ENCODE measurements at regions of chr12 and their contacts with region 1.

Region 1: GRCh38 chr12:54201001-54201794 is 12.4 kb upstream of the SMUG1 start:
- DNase-seq: no peak
- ATAC-seq: peak; percentile 95
- H3K4me3 ChIP-seq: no peak overlapping the region
- H3K27ac ChIP-seq: peak overlapping the region; percentile 5; the same call in 1 of the 2 replicates
- H3K4me1 ChIP-seq: peaks cover 11% of the 10 kb centered on the region; the same call in 1 of the 2 replicates
- H3K27me3 ChIP-seq: no peaks in the 10 kb centered on the region
- CTCF ChIP-seq: peak; percentile 98

Region 2: DNA sequence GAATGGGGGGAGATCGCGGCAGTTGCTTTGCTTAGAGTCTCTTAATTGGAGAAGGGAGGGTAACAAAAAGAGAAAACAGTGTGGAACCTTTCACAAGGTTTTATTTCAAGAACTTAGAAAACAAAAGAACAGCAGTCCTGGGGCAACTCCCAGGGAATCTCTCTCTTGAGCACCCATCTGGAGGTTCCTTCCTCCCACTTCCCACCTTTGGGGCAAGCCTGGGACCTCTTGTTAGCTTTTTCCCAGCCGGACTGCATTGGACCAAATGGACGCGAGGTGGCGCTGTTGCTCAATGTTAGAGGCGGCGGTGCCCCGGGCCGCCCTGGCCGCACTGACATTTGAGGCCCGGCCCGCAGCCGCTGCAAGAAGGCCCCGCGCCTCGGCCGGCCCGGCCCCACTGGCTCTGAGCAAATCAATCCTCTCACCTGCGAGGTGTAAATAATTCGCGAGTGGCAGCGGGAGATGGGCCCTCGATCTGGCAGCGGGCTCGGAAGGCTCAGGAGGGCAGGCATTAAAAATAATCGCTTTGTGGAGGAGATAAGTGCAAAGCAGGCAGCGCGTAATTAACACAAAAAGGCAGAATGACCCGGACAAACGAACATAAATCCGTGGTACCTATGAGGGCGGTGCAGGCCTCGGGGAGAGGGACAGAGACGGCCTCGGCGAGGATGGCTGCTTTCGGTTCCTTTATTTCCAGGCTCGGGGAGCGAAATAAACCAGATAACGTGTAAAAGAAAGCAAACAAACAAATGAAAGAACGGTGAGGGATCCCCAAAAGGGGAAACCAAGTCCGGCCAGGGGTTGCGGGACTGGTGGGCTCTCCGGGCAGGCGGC is 195.1 kb before region 1 on chr12:
- CTCF ChIA-PET with region 1: interaction called, 7 read pairs
- POLR2A ChIA-PET with region 1: no interaction called
- in situ Hi-C with region 1: no loop called
- intact Hi-C with region 1: loop called (anchors 1 kb)
- DNase-seq: no peak
- ATAC-seq: peak; percentile 56
- H3K4me3 ChIP-seq: peak overlapping the region; percentile 47 to 66
- H3K27ac ChIP-seq: peak overlapping the region; percentile 99
- H3K4me1 ChIP-seq: peaks cover 44% of the 10 kb centered on the region
- H3K27me3 ChIP-seq: no peaks in the 10 kb centered on the region
- CTCF ChIP-seq: peak; percentile 91

Region 3: DNA sequence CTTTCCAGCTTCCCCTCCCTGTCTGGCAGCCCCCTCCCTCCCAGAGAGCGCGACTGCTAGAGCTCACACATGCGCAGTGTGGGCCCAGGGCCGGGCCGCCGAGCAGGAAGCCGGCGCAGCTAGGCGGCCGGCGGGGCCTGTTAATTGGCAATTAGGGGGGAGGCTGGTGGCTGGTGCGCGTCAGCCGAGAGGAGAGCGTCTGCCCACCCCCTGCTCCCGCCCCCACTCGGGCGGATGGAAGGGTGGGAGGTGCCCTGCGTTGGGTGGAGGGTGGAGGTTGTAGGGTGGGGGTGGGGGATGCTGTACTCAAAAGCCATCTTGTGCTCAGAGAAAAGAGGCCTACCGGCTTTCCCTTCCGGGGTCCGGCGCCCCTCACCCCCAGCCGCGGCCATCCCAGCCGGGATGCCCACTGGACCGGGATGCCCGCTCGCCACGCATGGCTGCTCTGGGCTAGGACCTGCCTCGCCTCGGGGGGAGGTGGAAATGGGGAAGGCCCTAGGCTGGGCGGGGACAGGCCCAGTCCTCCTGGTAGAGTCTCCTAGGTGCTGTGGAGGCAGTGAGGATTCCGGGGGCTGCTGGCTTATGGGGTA is 183.2 kb before region 1 on chr12:
- CTCF ChIA-PET with region 1: interaction called, 14 read pairs
- POLR2A ChIA-PET with region 1: no interaction called
- in situ Hi-C with region 1: no loop called
- intact Hi-C with region 1: no loop called
- DNase-seq: peak; percentile 89
- ATAC-seq: peak; percentile 72
- H3K4me3 ChIP-seq: peak overlapping the region; percentile 72 to 91
- H3K27ac ChIP-seq: peak overlapping the region; percentile 94
- H3K4me1 ChIP-seq: peaks cover 60% of the 10 kb centered on the region
- H3K27me3 ChIP-seq: no peaks in the 10 kb centered on the region
- CTCF ChIP-seq: no peak; the same call in 1 of the 2 replicates

Region 4: DNA sequence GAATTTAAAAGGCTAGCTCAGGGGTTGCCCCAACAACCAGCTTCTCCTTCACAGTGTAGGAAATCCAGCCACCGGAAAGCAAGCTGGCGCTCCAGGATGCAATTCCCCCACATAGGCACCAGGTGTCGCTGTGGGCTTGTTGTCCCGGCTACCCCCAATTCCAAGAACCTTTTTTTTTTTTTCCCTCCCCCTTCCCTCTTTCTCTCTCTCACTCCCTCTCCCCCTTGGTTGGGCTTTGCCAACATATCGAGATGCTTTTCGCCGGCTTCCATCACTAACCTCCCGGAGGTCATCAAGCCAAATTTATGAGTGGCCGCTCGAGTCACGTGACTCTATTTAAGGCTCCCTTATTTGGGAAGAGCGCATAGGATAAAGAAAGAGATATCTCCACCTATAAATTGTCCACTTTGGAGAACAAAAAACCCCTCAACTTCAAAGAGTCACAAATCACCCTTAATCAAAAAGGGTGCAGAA is 168.5 kb before region 1 on chr12 and contains the start of gene HOXC5:
- CTCF ChIA-PET with region 1: interaction called, 17 read pairs
- POLR2A ChIA-PET with region 1: no interaction called
- in situ Hi-C with region 1: no loop called
- intact Hi-C with region 1: loop called (anchors 2 kb)
- DNase-seq: peak; percentile 67
- ATAC-seq: peak; percentile 36; the same call in 1 of the 2 replicates
- H3K4me3 ChIP-seq: peak within 1 kb of the TSS in 1 of 2 experiments; percentile 12; a peak in 1 of 4 replicates
- H3K27ac ChIP-seq: peak within 1 kb of the TSS; percentile 78
- H3K4me1 ChIP-seq: peaks cover 95% of the 10 kb centered on the region
- H3K27me3 ChIP-seq: no peaks in the 10 kb centered on the region
- CTCF ChIP-seq: peak; percentile 98
- total RNA-seq, gene HOXC5: 5.0 TPM

Region 5: DNA sequence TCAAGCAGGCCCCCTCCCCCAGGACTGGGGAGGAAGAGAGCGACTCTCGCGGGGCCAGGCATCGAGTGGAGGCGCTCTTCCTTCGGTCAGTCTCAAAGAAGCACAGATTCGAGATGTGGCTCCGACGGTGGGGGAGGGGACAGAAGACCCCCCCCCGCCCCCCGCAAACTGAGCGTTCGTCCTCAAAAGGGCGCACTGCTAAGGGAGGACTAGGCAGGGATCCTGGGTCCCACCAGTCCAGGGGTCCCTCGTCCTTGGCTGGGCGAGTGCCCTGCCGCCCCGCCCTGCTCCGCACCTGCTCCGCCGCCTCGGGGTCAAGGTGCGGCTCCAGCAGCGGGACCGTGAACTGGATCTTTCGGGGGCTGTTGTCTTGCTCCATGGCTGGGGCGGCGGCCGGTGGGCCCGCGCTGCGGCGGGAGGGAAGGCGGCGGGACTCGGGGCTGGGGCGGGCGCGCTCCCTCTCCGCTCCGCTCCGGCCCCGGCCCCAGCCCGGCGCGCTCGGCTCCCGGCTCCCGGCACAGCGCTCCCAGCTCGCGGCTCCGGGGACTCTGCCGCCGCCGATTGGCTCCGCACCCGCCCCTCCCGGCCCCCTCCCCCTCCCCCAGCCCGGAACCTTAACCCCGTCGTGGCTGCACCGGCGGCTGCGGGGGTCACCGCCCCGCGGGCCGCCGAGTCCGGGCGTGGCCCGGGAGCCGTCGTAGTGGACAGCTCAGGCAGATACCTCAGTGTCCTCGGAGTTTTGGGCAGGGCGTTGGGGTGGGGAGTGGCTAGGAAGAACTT is 387.1 kb after region 1 on chr12 and contains the start of gene PPP1R1A:
- CTCF ChIA-PET with region 1: interaction called, 11 read pairs
- POLR2A ChIA-PET with region 1: no interaction called
- in situ Hi-C with region 1: no loop called
- intact Hi-C with region 1: no loop called
- DNase-seq: no peak
- ATAC-seq: peak; percentile 49; the same call in 1 of the 2 replicates
- H3K4me3 ChIP-seq: peak within 1 kb of the TSS; percentile 16 to 20; a peak in 1 of 4 replicates
- H3K27ac ChIP-seq: no peak within 1 kb of the TSS
- H3K4me1 ChIP-seq: no peaks in the 10 kb centered on the region; the same call in 1 of the 2 replicates
- H3K27me3 ChIP-seq: peaks cover 21% of the 10 kb centered on the region
- CTCF ChIP-seq: no peak
- total RNA-seq, gene PPP1R1A: 0.23 TPM

Region 6: GRCh38 chr12:55365086-55365485 is 1163.9 kb after region 1 on chr12:
- CTCF ChIA-PET with region 1: no interaction called
- POLR2A ChIA-PET with region 1: no interaction called
- in situ Hi-C with region 1: no loop called
- intact Hi-C with region 1: no loop called
- DNase-seq: no peak
- ATAC-seq: no peak
- H3K4me3 ChIP-seq: no peak overlapping the region
- H3K27ac ChIP-seq: no peak overlapping the region
- H3K4me1 ChIP-seq: no peaks in the 10 kb centered on the region
- H3K27me3 ChIP-seq: no peaks in the 10 kb centered on the region
- CTCF ChIP-seq: no peak